CD4-positive, alpha-beta memory T cell (primary cell): ENCODE measurements at regions of chr5 and their contacts with region 1.

Region 1: GRCh38 chr5:55691265-55692105 is 20.6 kb downstream of the SLC38A9 start:
- DNase-seq: peak in 4 of 5 donors; percentile 34 to 44 (median 40)
- H3K4me3 ChIP-seq: no peak overlapping the region
- H3K4me3 Mint-ChIP-seq: no peak overlapping the region
- H3K27ac ChIP-seq: no peak overlapping the region
- H3K27ac Mint-ChIP-seq: peak overlapping the region in 1 of 7 donors; percentile 77
- H3K4me1 ChIP-seq: no peaks in the 10 kb centered on the region
- H3K4me1 Mint-ChIP-seq: peaks cover 0 to 6% (median 2%) of the 10 kb centered on the region in 4 donors
- H3K27me3 ChIP-seq: no peaks in the 10 kb centered on the region
- H3K27me3 Mint-ChIP-seq: no peaks in the 10 kb centered on the region

Region 2: GRCh38 chr5:55324815-55325418 is 366.6 kb before region 1 on chr5:
- CTCF ChIA-PET with region 1: interaction called, 3 read pairs
- POLR2A ChIA-PET with region 1: no interaction called
- intact Hi-C with region 1: loop called (anchors 5 kb)
- DNase-seq: peak in 4 of 5 donors; percentile 23 to 46 (median 36)
- H3K4me3 ChIP-seq: no peak overlapping the region
- H3K4me3 Mint-ChIP-seq: no peak overlapping the region
- H3K27ac ChIP-seq: no peak overlapping the region
- H3K27ac Mint-ChIP-seq: no peak overlapping the region
- H3K4me1 ChIP-seq: peaks cover 14% of the 10 kb centered on the region
- H3K4me1 Mint-ChIP-seq: peaks cover 19 to 36% (median 23%) of the 10 kb centered on the region in 4 donors
- H3K27me3 ChIP-seq: no peaks in the 10 kb centered on the region
- H3K27me3 Mint-ChIP-seq: no peaks in the 10 kb centered on the region

Region 3: GRCh38 chr5:55407059-55407684 is 284.3 kb before region 1 on chr5:
- CTCF ChIA-PET with region 1: interaction called, 14 read pairs
- POLR2A ChIA-PET with region 1: interaction called, 3 read pairs
- intact Hi-C with region 1: loop called (anchors 1 kb)
- DNase-seq: peak in 2 of 5 donors; percentile 13 to 17
- H3K4me3 ChIP-seq: no peak overlapping the region
- H3K4me3 Mint-ChIP-seq: no peak overlapping the region
- H3K27ac ChIP-seq: no peak overlapping the region
- H3K27ac Mint-ChIP-seq: no peak overlapping the region
- H3K4me1 ChIP-seq: no peaks in the 10 kb centered on the region
- H3K4me1 Mint-ChIP-seq: peaks cover 4 to 11% (median 6%) of the 10 kb centered on the region in 4 donors
- H3K27me3 ChIP-seq: no peaks in the 10 kb centered on the region
- H3K27me3 Mint-ChIP-seq: no peaks in the 10 kb centered on the region

Region 4: DNA sequence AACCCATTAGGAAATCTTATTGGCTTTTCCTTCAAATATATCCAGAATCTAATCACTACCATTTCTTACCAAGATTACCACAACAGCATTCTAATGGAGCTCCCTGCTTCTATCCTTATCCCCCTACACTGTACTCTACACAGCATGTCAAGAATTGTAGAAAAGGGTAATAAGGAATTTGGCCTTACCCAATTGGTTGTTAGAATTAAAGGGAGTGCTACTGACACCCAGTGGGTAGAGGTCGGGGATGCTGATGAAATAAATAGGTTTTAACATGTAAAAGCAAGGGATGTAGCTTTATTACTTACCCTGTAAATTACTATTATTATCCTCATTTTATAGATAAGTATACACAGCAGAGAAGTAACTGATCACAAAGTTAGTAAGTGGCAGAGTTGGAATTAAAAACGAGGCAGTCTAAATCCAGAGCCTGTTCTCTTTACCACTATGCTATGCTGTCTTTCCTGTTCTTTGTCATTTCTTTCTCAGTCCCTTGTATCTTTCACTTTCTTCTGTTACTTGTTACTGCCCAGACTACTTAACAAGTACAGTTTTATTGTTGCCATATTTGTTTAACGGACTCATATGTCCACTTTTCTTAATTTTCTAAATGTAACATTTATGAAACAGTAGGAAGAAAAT is 10.1 kb after region 1 on chr5:
- CTCF ChIA-PET with region 1: interaction called, 11 read pairs
- POLR2A ChIA-PET with region 1: interaction called, 5 read pairs
- intact Hi-C with region 1: no loop called
- DNase-seq: no peak
- H3K4me3 ChIP-seq: no peak overlapping the region
- H3K4me3 Mint-ChIP-seq: no peak overlapping the region
- H3K27ac ChIP-seq: no peak overlapping the region
- H3K27ac Mint-ChIP-seq: peak overlapping the region in 2 of 7 donors; percentile 53 to 57
- H3K4me1 ChIP-seq: no peaks in the 10 kb centered on the region
- H3K4me1 Mint-ChIP-seq: peaks cover 0 to 6% (median 5%) of the 10 kb centered on the region in 4 donors
- H3K27me3 ChIP-seq: no peaks in the 10 kb centered on the region
- H3K27me3 Mint-ChIP-seq: no peaks in the 10 kb centered on the region